Psoas muscle (tissue), 8 donors: ENCODE measurements at regions of chr16 and their contacts with region 1.

Region 1: GRCh38 chr16:19844945-19845641 is 39.6 kb downstream of the GPRC5B start:
- DNase-seq: no peak
- ATAC-seq: peak; percentile 66 to 79 (median 70)
- H3K4me3 ChIP-seq: no peak overlapping the region
- H3K27ac ChIP-seq: peak overlapping the region; percentile 89
- H3K4me1 ChIP-seq: peaks cover 28% of the 10 kb centered on the region
- H3K27me3 ChIP-seq: no peaks in the 10 kb centered on the region
- CTCF ChIP-seq: peak; percentile 8

Region 2: DNA sequence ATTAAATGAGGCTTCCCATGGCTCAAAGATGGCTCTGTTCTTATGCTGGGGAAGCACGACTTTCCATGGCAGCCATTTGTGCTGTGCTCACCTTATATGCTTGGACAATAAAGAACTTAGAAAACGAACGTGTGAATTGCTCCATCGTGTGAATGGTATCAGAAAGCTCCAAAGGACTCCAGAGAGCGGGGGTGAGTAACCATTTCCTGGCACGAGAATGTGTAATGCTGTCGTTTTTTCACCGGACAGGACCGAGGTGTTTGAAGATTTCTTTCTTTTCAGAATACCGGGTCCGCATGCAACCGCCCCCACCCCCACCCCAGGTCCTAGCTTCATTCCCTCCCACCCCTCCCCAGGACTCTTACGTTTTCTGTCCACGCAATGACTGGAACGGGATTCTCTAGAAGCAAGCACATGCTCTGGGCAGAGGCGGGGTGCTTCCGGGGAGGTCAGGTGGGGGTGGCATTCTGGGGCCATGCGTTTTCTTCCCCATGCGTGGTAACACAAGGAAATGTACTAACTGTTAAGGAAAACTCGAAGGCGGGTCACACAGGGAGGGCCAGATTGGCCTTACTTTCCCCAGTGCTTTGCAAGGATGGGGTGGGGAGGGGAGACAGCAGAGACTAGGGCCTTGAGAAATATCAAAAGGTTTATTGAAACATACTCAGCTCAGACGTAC is 13.4 kb after region 1 on chr16:
- intact Hi-C with region 1: loop called in 1 of 2 experiments (anchors 1 kb)
- DNase-seq: no peak
- ATAC-seq: no peak
- H3K4me3 ChIP-seq: no peak overlapping the region
- H3K27ac ChIP-seq: peak overlapping the region; percentile 23
- H3K4me1 ChIP-seq: peaks cover 16% of the 10 kb centered on the region
- H3K27me3 ChIP-seq: no peaks in the 10 kb centered on the region
- CTCF ChIP-seq: no peak

Region 3: GRCh38 chr16:19879241-19879792 is 34.2 kb after region 1 on chr16:
- intact Hi-C with region 1: loop called (anchors 5 kb)
- DNase-seq: peak in 1 of 2 donors; percentile 67
- ATAC-seq: peak in 3 of 4 donors; percentile 41 to 47 (median 42)
- H3K4me3 ChIP-seq: no peak overlapping the region
- H3K27ac ChIP-seq: peak overlapping the region; percentile 92
- H3K4me1 ChIP-seq: peaks cover 51% of the 10 kb centered on the region
- H3K27me3 ChIP-seq: no peaks in the 10 kb centered on the region
- CTCF ChIP-seq: no peak

Region 4: DNA sequence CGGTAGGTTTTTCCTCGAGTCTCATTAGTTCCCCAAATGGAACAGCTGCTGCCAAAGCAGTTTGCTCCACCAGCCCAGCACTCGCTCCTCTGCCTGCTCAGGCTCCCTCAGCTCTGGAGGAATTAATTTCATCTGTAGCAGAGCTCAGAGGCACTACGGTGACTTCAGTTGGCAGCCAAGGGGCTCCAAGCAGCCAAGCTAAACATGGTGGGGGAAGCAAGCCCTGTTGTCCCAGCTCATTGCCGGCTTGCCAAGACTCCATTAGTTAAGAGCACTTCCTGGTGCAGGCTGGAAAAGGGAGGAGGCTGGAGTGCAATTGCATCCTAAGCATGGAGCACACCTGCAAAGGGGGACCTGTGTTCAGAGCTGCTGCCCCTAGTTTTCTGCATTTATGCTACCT is 118.2 kb after region 1 on chr16:
- intact Hi-C with region 1: no loop called
- DNase-seq: peak in 1 of 2 donors; percentile 14
- ATAC-seq: no peak
- H3K4me3 ChIP-seq: no peak overlapping the region
- H3K27ac ChIP-seq: no peak overlapping the region
- H3K4me1 ChIP-seq: no peaks in the 10 kb centered on the region
- H3K27me3 ChIP-seq: peaks cover 0 to 3% (median 0%) of the 10 kb centered on the region in 3 donors
- CTCF ChIP-seq: no peak

Region 5: GRCh38 chr16:20484726-20485125 is 639.6 kb after region 1 on chr16:
- intact Hi-C with region 1: no loop called
- DNase-seq: no peak
- ATAC-seq: no peak
- H3K4me3 ChIP-seq: no peak overlapping the region
- H3K27ac ChIP-seq: no peak overlapping the region
- H3K4me1 ChIP-seq: no peaks in the 10 kb centered on the region
- H3K27me3 ChIP-seq: no peaks in the 10 kb centered on the region
- CTCF ChIP-seq: no peak